Esophagus muscularis mucosa (tissue), 4 donors: ENCODE measurements at regions of chr7 and their contacts with region 1.

Region 1: DNA sequence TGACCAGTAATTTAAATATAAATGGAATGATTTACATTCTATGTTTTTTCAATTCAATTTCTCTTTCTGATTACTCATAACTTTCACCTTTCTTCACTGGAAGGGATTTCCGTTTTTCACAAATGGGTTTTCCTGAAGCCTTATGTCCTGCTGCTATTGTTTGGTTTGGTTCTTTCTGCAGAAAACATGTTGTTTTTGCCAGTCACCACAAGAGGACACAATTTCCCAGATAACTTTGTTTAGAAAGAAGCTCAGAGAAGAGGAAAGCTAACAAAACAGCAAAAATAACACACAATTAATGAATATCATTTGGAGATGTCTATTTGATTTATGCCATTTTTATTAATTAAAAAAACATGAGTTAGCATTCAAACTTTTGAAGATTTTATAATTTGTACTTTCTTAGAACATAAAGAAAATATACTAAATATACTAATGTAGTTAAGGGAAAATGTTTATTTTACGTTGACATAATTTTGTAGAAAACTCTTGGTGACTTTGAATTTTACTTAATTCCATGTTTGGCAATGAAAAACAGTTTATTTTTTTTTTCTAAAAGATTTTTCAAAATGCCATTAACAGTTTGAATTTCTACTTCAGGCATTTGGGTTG is 4.6 kb upstream of the TWIST1 start:
- DNase-seq: no peak
- H3K4me3 ChIP-seq: no peak overlapping the region
- H3K27ac ChIP-seq: no peak overlapping the region
- H3K4me1 ChIP-seq: peaks cover 8 to 19% (median 15%) of the 10 kb centered on the region in 4 donors
- H3K27me3 ChIP-seq: peaks cover 0 to 32% (median 8%) of the 10 kb centered on the region in 4 donors
- CTCF ChIP-seq: peak; percentile 29 to 54 (median 37)
- EP300 ChIP-seq: no peak
- POLR2A ChIP-seq: no peak

Region 2: GRCh38 chr7:19060761-19061259 is 61.3 kb before region 1 on chr7:
- intact Hi-C with region 1: no loop called
- DNase-seq: no peak
- H3K4me3 ChIP-seq: no peak overlapping the region
- H3K27ac ChIP-seq: no peak overlapping the region
- H3K4me1 ChIP-seq: no peaks in the 10 kb centered on the region
- H3K27me3 ChIP-seq: no peaks in the 10 kb centered on the region
- CTCF ChIP-seq: no peak
- EP300 ChIP-seq: no peak
- POLR2A ChIP-seq: no peak

Region 3: DNA sequence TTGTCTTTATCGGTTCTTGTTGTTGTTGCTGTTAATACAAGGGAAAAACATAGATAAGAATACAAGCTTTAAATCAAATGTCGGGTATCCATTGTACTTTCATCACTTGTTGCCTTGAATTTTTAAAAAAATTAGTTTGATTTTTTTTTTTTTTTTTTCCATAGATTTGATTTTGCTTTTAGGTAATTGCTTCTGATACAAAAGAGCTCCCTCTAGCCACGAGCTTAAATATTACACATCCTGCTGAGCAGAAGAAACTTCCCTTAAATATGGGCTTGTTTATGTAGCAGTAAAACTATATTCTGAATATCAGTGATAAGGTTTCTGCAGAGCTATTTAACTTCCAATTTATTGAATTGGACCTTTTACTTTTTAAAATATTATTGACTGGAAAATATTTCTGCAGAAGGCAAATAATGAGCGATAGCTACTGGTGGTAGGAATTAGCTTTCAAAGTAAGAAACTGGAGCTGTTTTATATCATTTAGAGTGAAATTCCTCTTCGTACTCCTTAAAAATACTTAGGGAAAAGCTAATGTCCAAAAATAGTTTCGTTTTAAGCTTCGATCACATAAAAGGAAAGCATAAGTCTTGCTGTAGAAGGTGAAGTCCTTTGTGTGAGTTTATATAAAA is 369.9 kb after region 1 on chr7:
- intact Hi-C with region 1: loop called (anchors 10 kb)
- DNase-seq: no peak
- H3K4me3 ChIP-seq: no peak overlapping the region
- H3K27ac ChIP-seq: no peak overlapping the region
- H3K4me1 ChIP-seq: no peaks in the 10 kb centered on the region
- H3K27me3 ChIP-seq: no peaks in the 10 kb centered on the region
- CTCF ChIP-seq: peak; percentile 46 to 68 (median 46)
- EP300 ChIP-seq: no peak
- POLR2A ChIP-seq: no peak